T-cell (primary cell): ENCODE measurements at regions of chr10 and their contacts with region 1.

Region 1: GRCh38 chr10:113252650-113253618 is 299.9 kb upstream of the HABP2 start:
- DNase-seq: no peak
- ATAC-seq: no peak
- H3K4me3 ChIP-seq: no peak overlapping the region
- H3K4me3 Mint-ChIP-seq: no peak overlapping the region
- H3K27ac ChIP-seq: no peak overlapping the region
- H3K27ac Mint-ChIP-seq: no peak overlapping the region
- H3K4me1 ChIP-seq: no peaks in the 10 kb centered on the region
- H3K4me1 Mint-ChIP-seq: no peaks in the 10 kb centered on the region
- H3K27me3 ChIP-seq: no peaks in the 10 kb centered on the region
- H3K27me3 Mint-ChIP-seq: peaks cover 0 to 9% of the 10 kb centered on the region in 2 donors

Region 2: GRCh38 chr10:112687647-112688046 is 565.3 kb before region 1 on chr10:
- CTCF ChIA-PET with region 1: interaction called in 1 of 2 experiments, 13 read pairs
- POLR2A ChIA-PET with region 1: no interaction called
- DNase-seq: no peak
- ATAC-seq: no peak
- H3K4me3 ChIP-seq: no peak overlapping the region
- H3K4me3 Mint-ChIP-seq: no peak overlapping the region
- H3K27ac ChIP-seq: no peak overlapping the region
- H3K27ac Mint-ChIP-seq: no peak overlapping the region
- H3K4me1 ChIP-seq: no peaks in the 10 kb centered on the region
- H3K4me1 Mint-ChIP-seq: no peaks in the 10 kb centered on the region
- H3K27me3 ChIP-seq: no peaks in the 10 kb centered on the region
- H3K27me3 Mint-ChIP-seq: no peaks in the 10 kb centered on the region

Region 3: GRCh38 chr10:113121153-113121552 is 131.8 kb before region 1 on chr10:
- CTCF ChIA-PET with region 1: no interaction called
- POLR2A ChIA-PET with region 1: no interaction called
- DNase-seq: no peak
- ATAC-seq: no peak
- H3K4me3 ChIP-seq: no peak overlapping the region
- H3K4me3 Mint-ChIP-seq: no peak overlapping the region
- H3K27ac ChIP-seq: no peak overlapping the region
- H3K27ac Mint-ChIP-seq: no peak overlapping the region
- H3K4me1 ChIP-seq: no peaks in the 10 kb centered on the region
- H3K4me1 Mint-ChIP-seq: peaks cover under 1 to 3% (median 2%) of the 10 kb centered on the region in 3 donors
- H3K27me3 ChIP-seq: peaks cover 0 to 2% of the 10 kb centered on the region in 2 experiments
- H3K27me3 Mint-ChIP-seq: peaks cover 21 to 28% of the 10 kb centered on the region in 2 donors